ENCODE measurements at regions of chrX and their contacts with region 1.

Region 1: GRCh38 chrX:119130911-119131310 is 3.3 kb upstream of the KIAA1210 start:
- DNase-seq: no peak
- ATAC-seq: no peak
- H3K4me3 ChIP-seq: no peak overlapping the region
- H3K27ac ChIP-seq: no peak overlapping the region
- H3K4me1 ChIP-seq: no peaks in the 10 kb centered on the region
- H3K27me3 ChIP-seq: peaks cover 7% of the 10 kb centered on the region
- CTCF ChIP-seq: no peak
- POLR2A ChIP-seq: no peak
- RAD21 ChIP-seq: no peak

Region 2: DNA sequence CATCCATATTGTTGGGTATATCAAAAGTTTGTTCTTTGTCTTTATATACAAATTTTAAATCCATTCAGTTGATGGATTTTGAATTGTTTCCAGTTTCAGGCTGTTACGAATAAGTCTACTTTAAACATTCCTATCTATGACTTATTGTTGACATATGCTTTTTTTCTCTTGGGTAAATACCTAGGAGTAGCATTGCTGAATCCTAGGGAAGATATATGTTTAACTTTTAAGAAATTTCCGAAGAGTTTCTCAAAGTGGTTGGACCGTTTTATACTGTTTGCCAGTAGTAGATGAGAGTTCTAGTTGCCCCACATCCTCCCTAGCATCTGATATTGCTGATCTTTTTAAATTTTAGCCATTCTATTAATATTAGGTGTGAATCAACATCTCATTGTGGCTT is 464.4 kb before region 1 on chrX:
- CTCF ChIA-PET with region 1: no interaction called
- POLR2A ChIA-PET with region 1: no interaction called
- dilution Hi-C with region 1: no loop called
- in situ Hi-C with region 1: no loop called
- intact Hi-C with region 1: loop called (anchors 5 kb)
- DNase-seq: peak; percentile 31
- ATAC-seq: peak; percentile 44
- H3K4me3 ChIP-seq: no peak overlapping the region
- H3K27ac ChIP-seq: no peak overlapping the region
- H3K4me1 ChIP-seq: no peaks in the 10 kb centered on the region
- H3K27me3 ChIP-seq: no peaks in the 10 kb centered on the region
- CTCF ChIP-seq: no peak
- POLR2A ChIP-seq: no peak
- RAD21 ChIP-seq: no peak

Region 3: GRCh38 chrX:119625843-119626242 is 494.9 kb after region 1 on chrX:
- CTCF ChIA-PET with region 1: no interaction called
- POLR2A ChIA-PET with region 1: no interaction called
- dilution Hi-C with region 1: no loop called
- in situ Hi-C with region 1: no loop called
- intact Hi-C with region 1: no loop called
- DNase-seq: no peak
- ATAC-seq: no peak
- H3K4me3 ChIP-seq: no peak overlapping the region
- H3K27ac ChIP-seq: no peak overlapping the region
- H3K4me1 ChIP-seq: no peaks in the 10 kb centered on the region
- H3K27me3 ChIP-seq: no peaks in the 10 kb centered on the region
- CTCF ChIP-seq: no peak
- POLR2A ChIP-seq: no peak
- RAD21 ChIP-seq: no peak